Activated CD8-positive, alpha-beta T cell treated with anti-CD3 and anti-CD28 coated beads for 36 hours (primary cell): ENCODE measurements at regions of chr1 and their contacts with region 1.

Region 1: DNA sequence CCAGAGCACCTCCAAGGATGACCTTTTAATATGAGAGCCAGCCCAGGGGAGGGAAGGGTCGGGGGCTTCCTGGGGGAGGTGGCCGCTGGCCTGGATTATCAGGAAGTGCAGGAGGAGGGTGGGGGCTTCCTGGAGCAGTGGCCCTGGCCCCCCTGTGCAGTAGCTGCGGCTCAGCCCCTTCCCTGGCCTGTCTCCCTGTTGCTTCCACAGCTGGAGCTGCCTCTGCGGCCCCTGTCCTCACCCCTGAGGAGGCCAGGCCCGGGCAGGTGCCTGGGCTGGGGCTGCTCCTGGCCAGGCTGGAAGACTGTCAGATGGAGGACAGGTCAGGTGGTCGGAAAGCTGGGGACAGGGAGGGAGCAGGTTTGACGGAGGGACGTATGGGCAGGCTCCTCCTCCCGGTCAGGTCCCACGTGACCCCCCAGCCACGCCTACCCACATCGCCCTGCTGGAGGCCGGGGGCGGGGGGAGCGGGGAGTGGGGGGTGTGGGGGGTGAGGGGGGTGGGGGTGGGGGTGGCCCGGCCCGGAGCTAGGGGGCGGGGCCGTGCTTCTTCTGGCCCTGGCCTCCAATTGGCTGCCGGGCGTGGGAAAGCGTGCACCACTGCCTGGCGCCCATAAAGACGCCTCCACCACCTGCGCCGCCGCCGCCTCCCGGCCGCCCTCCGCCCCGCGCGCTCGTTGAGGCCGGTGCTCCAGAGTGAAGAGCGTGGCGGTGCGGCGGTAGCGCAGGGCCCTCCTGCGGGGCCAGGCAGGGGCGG is 10.2 kb upstream of the TNFRSF14 start:
- DNase-seq: peak; percentile 94
- ATAC-seq: peak; percentile 47
- H3K4me3 Mint-ChIP-seq: peak overlapping the region; percentile 83
- H3K27ac Mint-ChIP-seq: peak overlapping the region; percentile 98
- H3K4me1 Mint-ChIP-seq: peaks cover 24% of the 10 kb centered on the region
- H3K27me3 Mint-ChIP-seq: no peaks in the 10 kb centered on the region
- CTCF ChIP-seq: no peak

Region 2: GRCh38 chr1:2525920-2526823 is 19.8 kb before region 1 on chr1 and contains the start of gene PANK4:
- CTCF ChIA-PET with region 1: interaction called, 30 read pairs
- POLR2A ChIA-PET with region 1: interaction called, 138 read pairs
- intact Hi-C with region 1: no loop called
- DNase-seq: peak; percentile 94
- ATAC-seq: peak; percentile 83
- H3K4me3 Mint-ChIP-seq: peak within 1 kb of the TSS; percentile 81
- H3K27ac Mint-ChIP-seq: peak within 1 kb of the TSS; percentile 98
- H3K4me1 Mint-ChIP-seq: peaks cover 47% of the 10 kb centered on the region
- H3K27me3 Mint-ChIP-seq: peaks cover 7% of the 10 kb centered on the region
- CTCF ChIP-seq: no peak
- total RNA-seq, gene PANK4: 39.0 to 40.6 TPM

Region 3: DNA sequence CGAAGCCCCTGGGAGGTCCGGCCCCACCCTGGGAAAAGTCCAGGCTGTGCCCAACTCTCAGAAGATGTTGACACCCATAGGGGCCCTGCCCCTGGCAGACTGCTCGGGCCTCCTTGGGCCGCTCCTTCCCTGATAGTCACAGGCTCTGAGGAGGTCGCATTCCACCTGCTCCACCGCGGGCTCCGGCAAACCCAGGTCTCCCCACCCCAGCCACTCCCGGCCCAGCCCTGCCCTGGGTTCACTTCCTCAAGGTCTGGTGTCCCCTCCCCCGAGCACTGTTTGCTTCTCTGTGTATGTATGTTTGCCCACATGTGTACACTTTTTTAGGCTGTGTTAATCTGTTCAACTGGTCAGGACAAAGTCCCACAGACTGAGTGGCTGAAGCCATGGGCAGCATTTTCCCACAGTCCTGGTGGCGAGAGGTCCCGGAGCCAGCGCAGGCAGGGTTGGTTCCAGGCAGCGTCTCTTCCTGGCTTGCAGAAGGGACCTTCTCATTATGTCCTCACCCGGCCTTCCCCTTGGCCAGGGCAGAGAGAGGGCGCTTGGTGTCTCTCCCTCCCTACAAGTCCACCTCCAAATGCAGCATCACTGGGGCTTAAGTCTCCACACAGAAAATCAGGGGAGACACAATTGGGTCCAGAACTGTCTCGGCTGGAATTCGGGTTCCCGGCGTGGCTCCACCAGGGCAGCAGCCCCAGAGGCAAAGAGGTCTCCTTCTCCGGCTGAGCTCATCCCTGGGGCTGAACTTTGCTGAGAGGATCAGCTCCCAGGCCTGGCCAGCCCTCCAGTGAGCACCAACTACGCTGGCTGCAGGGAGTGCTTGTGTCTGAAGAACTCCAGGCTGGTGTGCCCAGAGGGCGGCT is 30.1 kb after region 1 on chr1:
- CTCF ChIA-PET with region 1: interaction called, 11 read pairs
- POLR2A ChIA-PET with region 1: interaction called, 9 read pairs
- intact Hi-C with region 1: no loop called
- DNase-seq: no peak
- ATAC-seq: no peak
- H3K4me3 Mint-ChIP-seq: peak overlapping the region; percentile 19
- H3K27ac Mint-ChIP-seq: peak overlapping the region; percentile 95
- H3K4me1 Mint-ChIP-seq: peaks cover 54% of the 10 kb centered on the region
- H3K27me3 Mint-ChIP-seq: no peaks in the 10 kb centered on the region
- CTCF ChIP-seq: no peak